ENCODE measurements at regions of chr22 and their contacts with region 1.

Region 1: DNA sequence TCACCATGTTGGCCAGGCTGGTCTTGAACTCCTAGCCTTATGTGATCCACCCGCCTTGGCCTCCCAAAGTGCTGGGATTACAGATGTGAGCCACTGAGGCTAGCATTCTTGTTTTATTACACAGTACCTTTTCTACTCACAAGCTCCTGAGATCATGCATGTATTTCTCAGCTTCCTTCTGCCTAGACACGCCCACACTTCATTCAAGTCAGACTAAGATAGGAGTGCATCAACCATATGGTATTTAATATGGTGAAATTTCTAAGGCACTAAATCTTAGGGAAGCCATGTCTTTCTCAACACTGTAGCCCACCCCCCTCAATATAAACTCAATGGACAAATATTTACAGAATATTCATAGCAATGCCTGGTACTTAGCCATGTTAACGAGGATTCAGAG is 62.1 kb downstream of the SLC25A17 start:
- DNase-seq: no peak
- H3K4me3 ChIP-seq: no peak overlapping the region
- H3K27ac ChIP-seq: no peak overlapping the region
- H3K4me1 ChIP-seq: no peaks in the 10 kb centered on the region
- H3K27me3 ChIP-seq: no peaks in the 10 kb centered on the region
- CTCF ChIP-seq: no peak
- EP300 ChIP-seq: no peak
- POLR2A ChIP-seq: no peak

Region 2: GRCh38 chr22:40024201-40025061 is 732.6 kb before region 1 on chr22:
- intact Hi-C with region 1: no loop called
- DNase-seq: peak; percentile 81 to 88
- H3K4me3 ChIP-seq: no peak overlapping the region
- H3K27ac ChIP-seq: peak overlapping the region in 1 of 5 donors; percentile 1
- H3K4me1 ChIP-seq: peaks cover 9 to 33% (median 17%) of the 10 kb centered on the region in 4 donors
- H3K27me3 ChIP-seq: no peaks in the 10 kb centered on the region
- CTCF ChIP-seq: peak in 5 of 7 experiments; percentile 75 to 90 (median 82)
- EP300 ChIP-seq: no peak
- POLR2A ChIP-seq: no peak

Region 3: DNA sequence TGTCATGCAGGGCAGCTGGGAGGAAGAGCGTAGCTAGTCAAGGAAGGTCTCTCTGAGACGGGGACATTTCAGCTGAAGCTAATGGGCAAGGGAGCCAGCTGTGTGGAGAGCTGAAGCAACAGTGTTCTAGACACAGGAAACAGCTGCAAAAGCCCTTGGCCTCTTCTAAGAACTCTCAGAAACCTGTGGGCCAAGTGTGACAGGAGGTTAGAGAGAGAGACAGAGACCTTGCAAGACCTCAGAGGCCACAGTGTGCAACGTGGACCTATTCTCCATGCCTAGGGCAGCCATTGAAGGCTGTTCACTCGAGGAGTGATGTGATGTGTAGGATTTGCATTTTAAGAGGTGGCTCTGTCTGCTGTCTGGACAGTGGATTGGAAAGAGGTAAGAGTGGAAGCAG is 628.1 kb before region 1 on chr22:
- intact Hi-C with region 1: no loop called
- DNase-seq: peak in 1 of 2 donors; percentile 41
- H3K4me3 ChIP-seq: no peak overlapping the region
- H3K27ac ChIP-seq: peak overlapping the region in 1 of 5 donors; percentile 32
- H3K4me1 ChIP-seq: no peaks in the 10 kb centered on the region
- H3K27me3 ChIP-seq: no peaks in the 10 kb centered on the region
- CTCF ChIP-seq: no peak
- EP300 ChIP-seq: no peak
- POLR2A ChIP-seq: no peak

Region 4: GRCh38 chr22:40679964-40680818 is 76.9 kb before region 1 on chr22:
- intact Hi-C with region 1: loop called (anchors 5 kb)
- DNase-seq: no peak
- H3K4me3 ChIP-seq: peak overlapping the region in 1 of 4 donors; percentile 12
- H3K27ac ChIP-seq: no peak overlapping the region
- H3K4me1 ChIP-seq: peaks cover 6 to 29% (median 20%) of the 10 kb centered on the region in 4 donors
- H3K27me3 ChIP-seq: peaks cover 0 to 49% (median 11%) of the 10 kb centered on the region in 3 donors
- CTCF ChIP-seq: no peak
- EP300 ChIP-seq: no peak
- POLR2A ChIP-seq: no peak

Region 5: DNA sequence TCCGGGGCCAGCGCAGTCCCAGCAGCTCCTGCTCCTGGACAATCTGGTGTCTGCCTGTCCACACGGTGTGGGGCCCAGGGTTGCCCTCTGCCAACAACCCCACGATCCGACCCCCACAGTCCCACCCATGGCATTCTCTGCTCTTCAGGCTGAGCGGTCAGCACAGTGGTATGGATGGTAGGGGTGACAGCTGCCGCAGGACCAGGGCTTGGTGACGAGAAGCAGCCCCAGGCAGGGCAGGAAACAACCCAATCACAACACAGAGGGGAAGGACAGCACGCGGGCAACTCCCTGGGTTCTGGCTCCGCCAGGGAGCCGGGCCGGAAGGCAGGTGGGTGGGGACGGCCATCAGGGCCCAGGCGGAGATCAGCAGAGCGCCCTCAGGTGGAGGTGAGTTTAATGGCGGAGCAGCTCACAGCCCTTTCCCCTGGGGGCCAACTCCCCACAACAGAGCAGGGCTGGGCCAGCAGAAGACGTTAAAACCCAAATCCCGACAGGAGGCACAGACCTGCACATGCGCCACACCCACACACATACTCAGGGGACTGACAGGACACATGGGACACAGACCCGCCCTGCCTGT is 488.9 kb after region 1 on chr22:
- intact Hi-C with region 1: no loop called
- DNase-seq: no peak
- H3K4me3 ChIP-seq: no peak overlapping the region
- H3K27ac ChIP-seq: no peak overlapping the region
- H3K4me1 ChIP-seq: no peaks in the 10 kb centered on the region
- H3K27me3 ChIP-seq: no peaks in the 10 kb centered on the region
- CTCF ChIP-seq: no peak
- EP300 ChIP-seq: no peak
- POLR2A ChIP-seq: no peak

Measured in stomach (tissue), 19 donors.